ENCODE measurements at regions of chr17 and their contacts with region 1.

Region 1: GRCh38 chr17:63434876-63435684 is 11.0 kb downstream of the CYB561 start:
- DNase-seq: peak; percentile 81
- ATAC-seq: peak; percentile 83
- H3K4me3 Mint-ChIP-seq: peak overlapping the region; percentile 50
- H3K27ac Mint-ChIP-seq: peak overlapping the region; percentile 85
- H3K4me1 Mint-ChIP-seq: peaks cover 49% of the 10 kb centered on the region
- H3K27me3 Mint-ChIP-seq: no peaks in the 10 kb centered on the region

Region 2: DNA sequence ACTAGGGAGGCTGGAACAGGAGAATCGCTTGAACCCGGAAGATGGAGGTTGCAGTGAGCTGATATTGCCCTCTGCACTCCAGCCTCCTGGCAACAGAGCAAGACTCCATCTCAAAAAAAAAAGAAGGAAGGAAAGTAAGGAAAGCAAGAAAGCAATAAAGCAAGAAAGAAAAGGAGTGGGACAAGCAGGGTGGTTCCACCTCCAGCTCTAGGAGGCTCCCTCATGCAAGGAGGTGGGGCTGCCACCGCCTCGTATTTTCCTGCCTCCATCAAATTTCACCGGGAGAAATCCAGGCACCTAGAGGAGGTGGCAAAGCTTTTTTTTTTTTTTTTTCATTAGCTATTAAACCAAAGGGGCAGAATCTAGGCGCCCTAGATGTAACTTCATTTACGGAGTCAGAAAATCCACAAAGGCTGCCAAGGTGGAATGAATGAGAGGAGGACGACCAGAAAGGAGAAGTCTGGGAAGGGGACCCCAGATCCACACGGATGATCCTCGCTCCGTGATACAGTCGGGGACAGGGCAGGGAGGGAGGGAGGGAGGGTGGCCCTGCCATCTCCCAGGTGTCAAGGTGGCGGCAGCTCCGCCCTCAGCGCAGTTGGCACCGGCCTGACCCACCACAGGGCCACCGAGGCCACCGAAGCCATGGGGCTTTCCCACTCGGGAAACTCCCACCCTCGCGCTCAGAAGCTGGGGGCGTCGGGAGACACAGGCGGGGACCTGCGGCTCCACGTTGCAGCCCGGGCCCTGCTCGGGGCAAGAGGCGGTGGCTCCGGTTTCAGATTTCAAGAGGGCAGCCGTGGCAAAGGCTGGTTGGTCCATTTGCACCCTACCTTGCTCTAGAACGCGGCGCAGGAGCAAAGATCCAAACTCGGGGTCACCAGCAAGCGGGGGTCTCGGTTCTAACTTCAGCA is 10.2 kb after region 1 on chr17:
- CTCF ChIA-PET with region 1: interaction called, 14 read pairs
- POLR2A ChIA-PET with region 1: interaction called, 3 read pairs
- DNase-seq: no peak
- ATAC-seq: peak; percentile 30
- H3K4me3 Mint-ChIP-seq: peak overlapping the region; percentile 52
- H3K27ac Mint-ChIP-seq: no peak overlapping the region
- H3K4me1 Mint-ChIP-seq: peaks cover 33% of the 10 kb centered on the region
- H3K27me3 Mint-ChIP-seq: peaks cover 18% of the 10 kb centered on the region

Region 3: GRCh38 chr17:63675607-63676413 is 240.7 kb after region 1 on chr17:
- CTCF ChIA-PET with region 1: no interaction called
- POLR2A ChIA-PET with region 1: no interaction called
- DNase-seq: no peak
- ATAC-seq: no peak
- H3K4me3 Mint-ChIP-seq: no peak overlapping the region
- H3K27ac Mint-ChIP-seq: no peak overlapping the region
- H3K4me1 Mint-ChIP-seq: no peaks in the 10 kb centered on the region
- H3K27me3 Mint-ChIP-seq: no peaks in the 10 kb centered on the region